ENCODE measurements at regions of chr1 and their contacts with region 1.

Region 1: GRCh38 chr1:87953732-87954344 is 625.2 kb downstream of the LMO4 start:
- DNase-seq: no peak
- ATAC-seq: peak; percentile 95
- H3K4me3 ChIP-seq: no peak overlapping the region
- H3K27ac ChIP-seq: no peak overlapping the region
- H3K4me1 ChIP-seq: no peaks in the 10 kb centered on the region
- H3K27me3 ChIP-seq: no peaks in the 10 kb centered on the region; a peak in 1 of 4 replicates
- CTCF ChIP-seq: peak; percentile 75 to 85 (median 76)
- EP300 ChIP-seq: no peak
- POLR2A ChIP-seq: no peak
- RAD21 ChIP-seq: peak; percentile 89

Region 2: DNA sequence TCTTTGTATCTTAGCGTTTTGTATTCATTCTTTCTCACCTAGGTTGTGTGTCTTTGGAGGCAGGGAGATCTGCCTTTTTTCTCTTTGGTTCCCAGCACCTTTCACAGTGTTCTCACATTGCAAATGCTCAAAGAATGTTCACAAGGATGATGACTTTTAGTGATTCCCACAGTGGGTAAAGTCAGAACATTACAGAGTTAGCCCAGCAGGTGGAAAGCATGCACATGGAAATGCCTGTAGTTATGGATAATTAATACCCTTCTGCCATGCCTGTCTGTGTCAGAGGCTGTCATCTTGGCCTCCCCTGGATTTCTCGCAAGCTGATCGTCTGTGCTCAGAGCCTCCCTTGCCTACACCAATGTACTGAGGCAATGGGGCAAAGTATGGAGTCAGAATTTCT is 166.3 kb before region 1 on chr1:
- CTCF ChIA-PET with region 1: no interaction called
- POLR2A ChIA-PET with region 1: no interaction called
- RAD21 ChIA-PET with region 1: no interaction called
- SMC1A ChIA-PET with region 1: no interaction called
- in situ Hi-C with region 1: no loop called
- intact Hi-C with region 1: loop called (anchors 5 kb)
- DNase-seq: no peak
- ATAC-seq: no peak
- H3K4me3 ChIP-seq: no peak overlapping the region
- H3K27ac ChIP-seq: no peak overlapping the region
- H3K4me1 ChIP-seq: no peaks in the 10 kb centered on the region
- H3K27me3 ChIP-seq: no peaks in the 10 kb centered on the region
- CTCF ChIP-seq: no peak
- EP300 ChIP-seq: no peak
- POLR2A ChIP-seq: no peak
- RAD21 ChIP-seq: peak; percentile 7; the same call in 1 of the 2 replicates

Region 3: GRCh38 chr1:87968197-87968955 is 14.5 kb after region 1 on chr1:
- CTCF ChIA-PET with region 1: interaction called, 13 read pairs
- POLR2A ChIA-PET with region 1: no interaction called
- RAD21 ChIA-PET with region 1: interaction called, 3 read pairs
- SMC1A ChIA-PET with region 1: interaction called, 14 read pairs
- in situ Hi-C with region 1: no loop called
- intact Hi-C with region 1: no loop called
- DNase-seq: no peak
- ATAC-seq: no peak
- H3K4me3 ChIP-seq: no peak overlapping the region
- H3K27ac ChIP-seq: no peak overlapping the region
- H3K4me1 ChIP-seq: no peaks in the 10 kb centered on the region
- H3K27me3 ChIP-seq: no peaks in the 10 kb centered on the region; a peak in 1 of 4 replicates
- CTCF ChIP-seq: no peak
- EP300 ChIP-seq: no peak
- POLR2A ChIP-seq: no peak
- RAD21 ChIP-seq: no peak